ENCODE measurements at regions of chr1 and their contacts with region 1.

Region 1: DNA sequence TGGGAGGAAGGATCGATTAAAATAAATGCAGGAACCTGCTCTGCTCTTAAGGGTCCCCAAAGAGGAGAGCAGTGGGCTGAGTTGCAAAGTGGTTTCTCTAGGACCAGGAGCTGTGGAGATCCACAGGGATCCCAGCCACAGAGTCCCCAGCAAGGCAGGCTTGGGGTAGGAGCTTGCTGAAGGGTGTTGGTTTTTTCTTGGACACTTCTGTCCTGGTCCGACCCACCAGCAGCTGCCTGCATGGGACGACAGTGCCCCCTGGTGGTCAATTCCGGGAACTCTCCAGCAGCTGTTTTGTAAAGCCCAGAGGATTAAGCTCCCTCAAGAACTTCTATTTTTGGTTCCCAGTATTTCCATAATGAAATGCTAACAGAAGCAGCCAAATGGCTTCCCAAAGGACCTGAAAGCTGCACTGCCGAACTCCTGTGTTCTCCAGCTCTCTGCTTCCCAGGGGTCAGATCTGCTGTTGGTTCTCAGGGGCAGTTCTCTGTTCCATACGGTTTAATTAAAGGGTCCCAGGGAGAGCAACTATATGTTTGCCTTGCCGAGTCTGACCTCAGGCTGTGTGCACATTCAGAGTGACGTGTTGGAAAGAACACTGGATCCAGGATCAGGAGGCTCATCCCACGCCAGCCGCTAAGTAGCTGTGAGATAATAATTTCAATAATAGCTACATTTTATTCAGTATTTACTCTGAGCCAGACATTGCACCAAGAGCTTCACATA is 23.2 kb downstream of the NENF start:
- DNase-seq: peak; percentile 86
- H3K4me3 ChIP-seq: no peak overlapping the region
- H3K27ac ChIP-seq: no peak overlapping the region
- H3K4me1 ChIP-seq: no peaks in the 10 kb centered on the region
- H3K27me3 ChIP-seq: no peaks in the 10 kb centered on the region
- CTCF ChIP-seq: peak; percentile 97

Region 2: GRCh38 chr1:211698161-211699026 is 757.6 kb before region 1 on chr1:
- CTCF ChIA-PET with region 1: interaction called, 7 read pairs
- POLR2A ChIA-PET with region 1: no interaction called
- intact Hi-C with region 1: loop called (anchors 5 kb)
- DNase-seq: peak; percentile 77
- H3K4me3 ChIP-seq: no peak overlapping the region
- H3K27ac ChIP-seq: no peak overlapping the region
- H3K4me1 ChIP-seq: peaks cover 15% of the 10 kb centered on the region
- H3K27me3 ChIP-seq: no peaks in the 10 kb centered on the region
- CTCF ChIP-seq: peak; percentile 99

Region 3: DNA sequence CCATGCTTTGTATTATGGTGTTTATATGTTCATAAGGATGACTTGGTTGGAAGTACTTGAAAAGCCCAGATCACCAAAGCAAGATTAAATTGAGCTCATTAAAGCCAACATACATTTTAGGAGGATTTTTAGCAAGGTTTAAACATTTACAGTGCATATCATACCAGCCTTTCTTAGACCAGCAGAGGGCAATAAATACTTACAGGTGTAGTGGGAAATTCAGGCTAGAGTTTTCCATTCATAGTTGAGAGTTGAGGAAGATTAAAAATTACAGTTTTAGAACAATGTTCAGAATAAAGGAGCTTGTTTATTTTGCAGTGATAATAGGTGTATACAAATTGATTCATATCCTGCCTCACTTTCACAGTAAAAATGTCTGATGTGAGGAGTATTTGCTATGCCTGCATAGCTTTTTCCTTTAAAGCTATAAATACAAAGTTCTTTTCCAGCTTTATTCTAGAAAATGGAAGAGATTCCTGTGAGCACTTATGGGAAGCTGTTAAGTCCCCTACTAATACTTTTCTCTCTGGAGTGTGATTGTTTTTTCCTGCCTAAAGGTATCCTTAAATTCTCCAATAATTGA is 385.2 kb before region 1 on chr1:
- CTCF ChIA-PET with region 1: interaction called, 10 read pairs
- POLR2A ChIA-PET with region 1: no interaction called
- intact Hi-C with region 1: no loop called
- DNase-seq: peak; percentile 32
- H3K4me3 ChIP-seq: no peak overlapping the region
- H3K27ac ChIP-seq: no peak overlapping the region
- H3K4me1 ChIP-seq: no peaks in the 10 kb centered on the region
- H3K27me3 ChIP-seq: no peaks in the 10 kb centered on the region
- CTCF ChIP-seq: peak; percentile 59

Region 4: GRCh38 chr1:212477014-212477679 is 21.2 kb after region 1 on chr1:
- CTCF ChIA-PET with region 1: interaction called, 20 read pairs
- POLR2A ChIA-PET with region 1: no interaction called
- intact Hi-C with region 1: no loop called
- DNase-seq: peak; percentile 88
- H3K4me3 ChIP-seq: no peak overlapping the region
- H3K27ac ChIP-seq: no peak overlapping the region
- H3K4me1 ChIP-seq: no peaks in the 10 kb centered on the region
- H3K27me3 ChIP-seq: no peaks in the 10 kb centered on the region
- CTCF ChIP-seq: peak; percentile 91

Measured in A673 (cell line).